ENCODE measurements at regions of chr19 and their contacts with region 1.

Region 1: GRCh38 chr19:44845612-44846454 is at the start of gene NECTIN2:
- DNase-seq: peak; percentile 37
- ATAC-seq: peak; percentile 85
- H3K4me3 ChIP-seq: peak within 1 kb of the TSS; percentile 59; the same call in 1 of the 2 replicates
- H3K27ac ChIP-seq: no peak within 1 kb of the TSS
- H3K4me1 ChIP-seq: peaks cover 8% of the 10 kb centered on the region
- H3K27me3 ChIP-seq: peaks cover 9 to 11% of the 10 kb centered on the region in 2 experiments
- CTCF ChIP-seq: peak; percentile 47 to 75 (median 60)
- EP300 ChIP-seq: no peak
- POLR2A ChIP-seq: no peak
- RAD21 ChIP-seq: 0 out of 2 replicates have a peak, but pooled peaks have one; percentile 21
- polyA plus RNA-seq, gene NECTIN2: not detected

Region 2: DNA sequence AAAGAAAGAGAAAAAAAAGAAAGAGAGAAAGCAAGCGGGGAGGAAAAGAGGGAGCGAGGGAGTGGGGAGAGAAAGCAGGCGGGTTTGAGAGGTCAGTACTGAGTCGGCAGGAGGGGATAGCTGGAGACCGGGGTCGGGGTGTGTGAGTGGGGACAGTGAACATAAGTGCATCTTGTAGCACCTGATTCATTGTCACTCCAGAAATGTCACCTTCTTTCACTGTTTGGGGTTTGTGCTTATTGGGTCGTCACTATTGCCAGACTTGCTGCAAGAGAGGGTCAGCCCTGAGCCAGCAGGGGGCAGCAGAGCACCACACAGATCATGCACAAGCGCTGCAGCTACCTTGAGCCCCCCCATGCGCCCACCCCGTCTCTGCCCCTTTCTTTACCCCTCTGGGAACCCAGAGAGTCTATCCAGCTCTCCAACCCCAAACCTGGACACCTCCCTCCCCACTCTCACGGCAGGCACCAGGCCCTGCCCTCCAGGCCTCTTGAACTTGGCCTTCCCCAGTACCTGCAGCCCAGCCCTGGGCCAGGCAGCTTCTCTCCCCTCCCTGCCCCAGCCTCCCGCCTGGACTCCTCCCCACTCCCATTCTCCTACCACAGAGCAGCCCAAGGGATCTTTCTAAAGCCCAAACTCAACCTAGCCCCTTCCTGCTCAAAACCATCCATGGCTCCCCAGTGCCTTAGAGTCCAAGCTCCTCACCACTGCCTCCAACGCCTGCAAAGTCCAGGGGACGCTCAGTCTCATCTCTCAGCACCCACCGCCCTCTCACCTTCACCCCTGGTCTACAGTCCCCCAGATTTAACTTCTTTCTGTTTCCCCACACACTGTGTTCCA is 156.6 kb before region 1 on chr19:
- CTCF ChIA-PET with region 1: interaction called, 5 read pairs
- POLR2A ChIA-PET with region 1: no interaction called
- RAD21 ChIA-PET with region 1: interaction called, 5 read pairs
- SMC1A ChIA-PET with region 1: no interaction called
- in situ Hi-C with region 1: no loop called
- intact Hi-C with region 1: loop called (anchors 2 kb)
- DNase-seq: no peak
- ATAC-seq: peak; percentile 54
- H3K4me3 ChIP-seq: no peak overlapping the region
- H3K27ac ChIP-seq: no peak overlapping the region
- H3K4me1 ChIP-seq: peaks cover 44% of the 10 kb centered on the region
- H3K27me3 ChIP-seq: no peaks in the 10 kb centered on the region
- CTCF ChIP-seq: peak; percentile 89 to 98 (median 92)
- EP300 ChIP-seq: no peak
- POLR2A ChIP-seq: no peak
- RAD21 ChIP-seq: peak; percentile 82

Region 3: GRCh38 chr19:44782729-44783128 is 63.1 kb before region 1 on chr19:
- CTCF ChIA-PET with region 1: interaction called, 12 read pairs
- POLR2A ChIA-PET with region 1: no interaction called
- RAD21 ChIA-PET with region 1: interaction called, 7 read pairs
- SMC1A ChIA-PET with region 1: interaction called, 5 read pairs
- in situ Hi-C with region 1: no loop called
- intact Hi-C with region 1: loop called (anchors 2 kb)
- DNase-seq: no peak
- ATAC-seq: no peak
- H3K4me3 ChIP-seq: no peak overlapping the region
- H3K27ac ChIP-seq: no peak overlapping the region
- H3K4me1 ChIP-seq: no peaks in the 10 kb centered on the region; the same call in 1 of the 2 replicates
- H3K27me3 ChIP-seq: no peaks in the 10 kb centered on the region
- CTCF ChIP-seq: no peak
- EP300 ChIP-seq: no peak
- POLR2A ChIP-seq: no peak
- RAD21 ChIP-seq: no peak

Region 4: GRCh38 chr19:44800461-44800860 is 45.4 kb before region 1 on chr19:
- CTCF ChIA-PET with region 1: interaction called, 5 read pairs
- POLR2A ChIA-PET with region 1: no interaction called
- RAD21 ChIA-PET with region 1: interaction called, 3 read pairs
- SMC1A ChIA-PET with region 1: interaction called, 3 read pairs
- in situ Hi-C with region 1: no loop called
- intact Hi-C with region 1: loop called (anchors 5 kb)
- DNase-seq: peak; percentile 34
- ATAC-seq: peak; percentile 99
- H3K4me3 ChIP-seq: no peak overlapping the region
- H3K27ac ChIP-seq: no peak overlapping the region
- H3K4me1 ChIP-seq: peaks cover 21% of the 10 kb centered on the region
- H3K27me3 ChIP-seq: no peaks in the 10 kb centered on the region; a peak in 1 of 4 replicates
- CTCF ChIP-seq: peak; percentile 87 to 98 (median 95)
- EP300 ChIP-seq: no peak; a peak in 1 of 4 replicates
- POLR2A ChIP-seq: no peak
- RAD21 ChIP-seq: peak; percentile 72

Region 5: DNA sequence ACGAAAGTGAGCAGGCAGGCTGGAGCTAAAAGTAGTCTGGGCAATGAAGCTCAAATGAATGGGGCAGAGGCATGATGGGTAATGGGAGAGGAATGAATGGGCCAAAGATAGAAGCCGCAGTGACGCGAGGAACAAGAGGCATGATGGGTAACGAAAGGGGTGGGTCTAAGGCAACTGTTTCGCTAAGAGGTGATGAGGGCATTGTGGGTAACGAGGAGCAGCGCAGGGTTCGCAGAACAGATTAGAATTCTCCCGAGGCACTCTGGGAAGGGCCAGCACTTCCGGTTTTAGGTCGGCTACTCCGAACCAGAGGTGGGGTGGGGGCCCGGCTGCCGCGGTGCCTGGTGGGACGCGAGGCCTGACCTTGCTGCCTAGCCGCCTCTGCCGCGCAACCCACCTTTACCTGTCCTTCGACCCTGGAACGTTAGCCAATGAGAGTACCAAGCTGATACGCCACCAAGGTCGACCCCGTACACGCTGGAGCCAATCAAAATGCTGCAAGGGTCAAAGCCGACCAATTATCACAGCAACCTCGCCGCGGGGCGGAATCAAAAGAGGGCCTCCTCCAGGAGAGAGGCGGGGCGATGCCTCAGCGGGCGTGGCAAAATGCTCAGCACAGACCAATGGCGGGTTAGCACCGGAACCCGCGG is 44.7 kb after region 1 on chr19:
- CTCF ChIA-PET with region 1: interaction called, 3 read pairs
- POLR2A ChIA-PET with region 1: no interaction called
- RAD21 ChIA-PET with region 1: no interaction called
- SMC1A ChIA-PET with region 1: no interaction called
- in situ Hi-C with region 1: no loop called
- intact Hi-C with region 1: loop called (anchors 5 kb)
- DNase-seq: peak; percentile 100
- ATAC-seq: peak; percentile 92
- H3K4me3 ChIP-seq: peak overlapping the region; percentile 69
- H3K27ac ChIP-seq: peak overlapping the region; percentile 96
- H3K4me1 ChIP-seq: peaks cover 19% of the 10 kb centered on the region
- H3K27me3 ChIP-seq: no peaks in the 10 kb centered on the region
- CTCF ChIP-seq: no peak
- EP300 ChIP-seq: peak; percentile 8 to 39; a peak in 1 of 4 replicates
- POLR2A ChIP-seq: peak; percentile 72
- RAD21 ChIP-seq: no peak